Calu3 (cell line): ENCODE measurements at regions of chr17 and their contacts with region 1.

Region 1: DNA sequence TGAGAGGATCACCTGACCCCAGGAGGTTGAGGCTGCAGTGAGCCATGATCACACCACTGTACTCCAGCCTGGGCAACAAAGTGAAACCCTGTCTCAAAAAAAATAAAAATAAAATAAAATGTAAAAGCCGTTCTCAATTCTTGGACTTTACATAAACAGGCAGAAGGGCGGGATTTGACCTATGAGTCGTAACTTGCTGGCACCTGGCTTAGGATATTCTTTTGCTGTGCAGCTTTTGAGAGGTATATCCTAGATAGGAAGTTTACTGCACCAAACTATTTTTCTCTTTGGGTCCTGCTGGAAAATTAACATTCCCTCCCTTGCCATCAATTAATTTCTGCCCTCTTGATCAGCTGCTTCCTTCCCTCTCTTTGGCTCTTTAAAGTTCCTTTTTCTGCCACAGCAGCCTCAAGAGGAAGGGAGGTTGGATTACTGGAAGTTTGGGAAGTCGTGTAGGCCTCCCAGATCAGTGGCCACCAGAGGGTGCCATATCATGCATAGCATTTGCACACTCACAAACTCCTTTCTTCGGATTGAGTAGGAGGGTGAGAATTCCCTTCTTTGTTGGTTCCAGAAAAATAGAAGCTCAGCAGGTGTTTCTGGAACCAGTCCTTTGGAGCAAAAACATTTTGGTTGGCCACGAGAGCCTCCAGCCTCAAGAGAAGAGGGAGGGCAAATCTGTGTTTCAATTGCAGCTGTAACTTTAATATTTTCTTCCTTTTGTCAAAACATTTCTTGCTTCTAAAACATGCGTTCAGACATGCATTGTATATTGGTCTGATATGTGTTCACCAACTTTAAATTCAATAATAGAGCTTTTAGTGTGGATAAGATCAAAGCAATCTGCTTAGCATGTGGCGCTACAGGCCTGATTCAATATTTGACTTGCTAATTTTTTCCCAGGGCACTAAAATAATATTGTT is 147.3 kb downstream of the CCDC182 start:
- DNase-seq: peak; percentile 52
- H3K4me3 Mint-ChIP-seq: no peak overlapping the region
- H3K27ac Mint-ChIP-seq: no peak overlapping the region
- H3K4me1 Mint-ChIP-seq: peaks cover 8% of the 10 kb centered on the region
- H3K27me3 Mint-ChIP-seq: no peaks in the 10 kb centered on the region
- CTCF ChIP-seq: peak; percentile 60

Region 2: DNA sequence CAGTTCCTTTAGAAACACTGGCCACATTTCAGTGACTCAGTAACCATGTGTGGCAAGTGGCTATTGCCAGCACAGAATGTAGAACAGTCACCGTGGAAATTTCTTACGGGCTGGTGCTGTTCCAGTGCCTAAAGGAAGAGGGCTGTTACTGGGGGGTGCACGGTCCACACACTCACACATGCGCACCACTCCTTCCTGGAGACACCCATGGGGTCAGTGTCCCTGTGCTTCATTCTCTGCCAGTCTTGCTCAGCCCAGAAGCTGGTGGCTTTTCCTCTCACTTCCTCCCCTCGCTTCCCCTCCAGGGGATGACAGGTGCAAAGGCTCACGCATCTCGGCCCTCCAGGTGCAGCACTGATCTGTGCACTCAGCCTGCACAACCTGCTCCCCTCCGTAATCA is 31.7 kb after region 1 on chr17:
- CTCF ChIA-PET with region 1: no interaction called
- intact Hi-C with region 1: no loop called
- DNase-seq: no peak
- H3K4me3 Mint-ChIP-seq: no peak overlapping the region
- H3K27ac Mint-ChIP-seq: no peak overlapping the region
- H3K4me1 Mint-ChIP-seq: no peaks in the 10 kb centered on the region
- H3K27me3 Mint-ChIP-seq: no peaks in the 10 kb centered on the region
- CTCF ChIP-seq: no peak

Region 3: GRCh38 chr17:57671667-57672632 is 74.2 kb after region 1 on chr17:
- CTCF ChIA-PET with region 1: interaction called, 4 read pairs
- intact Hi-C with region 1: loop called (anchors 5 kb)
- DNase-seq: peak; percentile 64
- H3K4me3 Mint-ChIP-seq: no peak overlapping the region
- H3K27ac Mint-ChIP-seq: no peak overlapping the region
- H3K4me1 Mint-ChIP-seq: no peaks in the 10 kb centered on the region
- H3K27me3 Mint-ChIP-seq: no peaks in the 10 kb centered on the region
- CTCF ChIP-seq: peak; percentile 73

Region 4: DNA sequence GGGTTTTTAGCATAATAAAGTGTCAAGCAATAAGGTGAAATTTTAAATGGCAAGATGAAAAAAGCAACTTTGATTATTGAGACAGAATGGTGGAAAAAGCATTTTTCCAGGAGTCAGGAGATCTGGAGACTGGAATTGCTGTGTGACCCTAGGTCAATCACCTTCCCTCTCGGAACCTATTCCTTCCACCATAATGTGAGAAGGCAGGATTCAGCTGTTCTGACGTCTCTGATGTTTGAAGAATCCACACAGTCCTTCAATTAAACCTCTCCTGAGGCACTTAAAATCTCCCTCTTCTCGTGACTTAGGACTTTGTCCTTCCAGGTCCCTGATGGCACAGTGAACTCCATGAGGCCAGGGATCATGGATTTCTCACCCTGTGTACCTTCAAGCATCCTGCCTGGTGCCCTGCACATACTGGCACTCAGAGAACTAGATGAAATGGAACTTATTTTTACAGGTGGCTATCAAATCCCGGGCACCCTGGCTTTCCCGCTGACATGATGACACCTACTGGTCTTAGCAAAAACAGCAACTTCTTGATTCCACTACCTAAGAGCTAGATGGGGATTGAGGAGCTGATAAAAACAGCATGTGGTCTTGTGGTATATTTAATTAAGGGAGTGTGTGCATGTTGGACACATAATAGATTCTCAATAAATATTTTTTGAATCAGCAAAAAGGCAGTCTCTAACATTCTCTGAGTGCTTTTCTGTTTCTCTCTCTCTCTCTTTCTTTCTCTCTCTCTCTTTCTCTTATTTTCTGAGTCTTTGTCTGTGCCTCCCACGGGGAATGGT is 149.6 kb after region 1 on chr17:
- CTCF ChIA-PET with region 1: interaction called, 3 read pairs
- intact Hi-C with region 1: loop called (anchors 5 kb)
- DNase-seq: peak; percentile 17
- H3K4me3 Mint-ChIP-seq: no peak overlapping the region
- H3K27ac Mint-ChIP-seq: no peak overlapping the region
- H3K4me1 Mint-ChIP-seq: no peaks in the 10 kb centered on the region
- H3K27me3 Mint-ChIP-seq: peaks cover 71% of the 10 kb centered on the region
- CTCF ChIP-seq: no peak